ENCODE measurements at regions of chr1 and their contacts with region 1.

Region 1: DNA sequence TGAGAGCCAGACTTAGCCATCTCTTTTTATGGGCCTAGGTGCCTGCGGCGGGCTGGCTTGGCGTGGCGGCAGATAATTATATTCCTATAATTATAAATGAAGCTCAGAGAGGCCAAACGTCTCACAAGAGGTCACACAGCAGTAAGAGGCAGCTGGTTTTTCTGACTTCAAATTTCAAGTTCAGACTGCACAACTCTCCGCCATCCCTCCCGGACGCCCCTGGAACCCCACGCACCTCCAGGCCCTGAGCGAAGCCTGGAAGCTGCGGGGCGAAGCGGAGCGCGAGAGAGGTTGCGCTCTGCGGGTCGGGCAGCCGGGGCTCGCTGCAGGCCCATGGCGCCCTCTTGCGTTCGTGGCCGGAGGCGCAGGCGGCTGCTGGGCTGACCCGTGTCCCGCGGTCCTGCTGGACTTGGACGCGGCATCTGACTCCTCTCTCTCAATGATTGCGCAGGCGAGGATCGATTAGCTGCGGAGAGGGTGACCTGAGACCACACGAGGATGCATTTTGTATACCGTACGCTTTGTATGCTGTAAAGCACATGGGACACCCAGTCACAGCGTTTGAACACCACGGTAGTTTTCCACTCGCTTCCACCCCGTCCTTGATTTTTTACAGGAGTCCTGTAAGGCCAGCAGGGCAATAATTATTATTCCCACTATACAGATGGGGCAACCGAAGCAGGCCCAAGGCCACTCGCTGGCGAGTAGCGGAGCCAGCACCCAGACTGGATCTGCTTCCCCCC is 272.7 kb downstream of the FOXD2 start:
- DNase-seq: peak; percentile 57
- H3K4me3 Mint-ChIP-seq: no peak overlapping the region
- H3K27ac Mint-ChIP-seq: no peak overlapping the region
- H3K4me1 Mint-ChIP-seq: peaks cover 5% of the 10 kb centered on the region
- H3K27me3 Mint-ChIP-seq: peaks cover 72% of the 10 kb centered on the region

Region 2: GRCh38 chr1:47225430-47226100 is 484.9 kb before region 1 on chr1:
- intact Hi-C with region 1: loop called (anchors 5 kb)
- DNase-seq: no peak
- H3K4me3 Mint-ChIP-seq: peak overlapping the region; percentile 23
- H3K27ac Mint-ChIP-seq: no peak overlapping the region
- H3K4me1 Mint-ChIP-seq: peaks cover 11% of the 10 kb centered on the region
- H3K27me3 Mint-ChIP-seq: peaks cover 59% of the 10 kb centered on the region

Region 3: DNA sequence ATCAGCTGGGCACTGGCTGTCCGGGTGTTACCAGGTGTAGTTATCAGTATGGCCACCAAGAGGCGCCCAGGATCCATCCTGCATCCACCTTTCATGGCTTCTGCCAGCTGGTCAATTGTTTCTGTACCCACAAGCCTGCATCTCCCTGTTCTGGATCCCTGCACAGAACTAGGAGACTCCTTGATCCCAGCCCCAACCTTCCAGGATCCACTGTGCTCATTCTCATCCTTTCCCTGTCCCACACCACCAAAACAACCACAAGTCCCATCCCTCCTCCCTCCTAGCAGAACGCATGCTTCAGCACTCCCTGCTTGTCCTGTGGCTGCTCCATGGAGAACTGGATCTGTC is 321.6 kb before region 1 on chr1:
- intact Hi-C with region 1: loop called (anchors 2 kb)
- DNase-seq: peak; percentile 19
- H3K4me3 Mint-ChIP-seq: no peak overlapping the region
- H3K27ac Mint-ChIP-seq: no peak overlapping the region
- H3K4me1 Mint-ChIP-seq: no peaks in the 10 kb centered on the region
- H3K27me3 Mint-ChIP-seq: peaks cover 10% of the 10 kb centered on the region

Region 4: GRCh38 chr1:47444562-47445465 is 265.7 kb before region 1 on chr1:
- intact Hi-C with region 1: loop called (anchors 2 kb)
- DNase-seq: no peak
- H3K4me3 Mint-ChIP-seq: peak overlapping the region; percentile 50
- H3K27ac Mint-ChIP-seq: peak overlapping the region; percentile 2
- H3K4me1 Mint-ChIP-seq: peaks cover 13% of the 10 kb centered on the region
- H3K27me3 Mint-ChIP-seq: peaks cover 49% of the 10 kb centered on the region

Region 5: DNA sequence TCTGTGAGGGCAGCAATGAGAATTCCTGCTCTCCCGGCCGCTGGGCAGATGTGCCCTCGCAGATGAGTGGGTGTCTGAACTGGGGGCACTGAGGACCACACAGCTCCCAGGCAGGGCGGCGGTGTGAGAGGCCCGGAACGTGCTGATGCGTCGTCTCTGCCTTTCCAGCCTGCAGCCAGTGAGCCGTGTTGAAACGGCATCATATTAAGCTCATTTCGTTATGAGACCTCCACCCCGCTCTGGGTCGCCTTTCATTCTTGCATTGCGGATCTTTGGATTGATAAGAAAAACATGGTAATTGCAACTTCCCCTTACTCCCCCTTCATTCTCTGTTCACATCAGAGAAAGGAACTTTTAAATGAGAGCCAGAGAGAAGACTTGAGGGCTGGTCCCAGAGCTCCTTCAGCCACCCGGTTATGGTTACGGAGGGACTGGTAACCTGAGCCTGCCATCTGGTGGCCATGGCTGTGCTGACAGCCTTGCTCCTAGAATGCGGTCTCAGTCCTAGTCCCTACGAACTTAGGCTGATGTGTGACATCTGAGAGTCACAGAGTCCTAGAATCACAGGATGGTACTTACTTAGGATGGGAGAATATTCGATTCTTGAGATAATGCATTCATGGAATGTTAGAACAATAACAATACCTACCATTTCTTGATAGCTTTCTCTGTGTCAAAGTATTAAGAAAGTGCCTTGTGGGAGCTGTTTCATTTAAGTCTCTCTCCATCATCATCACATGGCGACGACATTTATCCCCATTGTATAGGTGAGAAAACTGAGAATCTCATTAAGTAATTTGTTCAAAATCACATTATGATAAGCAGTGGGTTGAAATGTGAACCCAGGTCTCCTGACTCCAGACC is 15.7 kb after region 1 on chr1:
- intact Hi-C with region 1: loop called (anchors 2 kb)
- DNase-seq: peak; percentile 38
- H3K4me3 Mint-ChIP-seq: no peak overlapping the region
- H3K27ac Mint-ChIP-seq: no peak overlapping the region
- H3K4me1 Mint-ChIP-seq: peaks cover 6% of the 10 kb centered on the region
- H3K27me3 Mint-ChIP-seq: peaks cover 42% of the 10 kb centered on the region